Heart left ventricle (tissue), 16 donors: ENCODE measurements at regions of chr17 and their contacts with region 1.

Region 1: DNA sequence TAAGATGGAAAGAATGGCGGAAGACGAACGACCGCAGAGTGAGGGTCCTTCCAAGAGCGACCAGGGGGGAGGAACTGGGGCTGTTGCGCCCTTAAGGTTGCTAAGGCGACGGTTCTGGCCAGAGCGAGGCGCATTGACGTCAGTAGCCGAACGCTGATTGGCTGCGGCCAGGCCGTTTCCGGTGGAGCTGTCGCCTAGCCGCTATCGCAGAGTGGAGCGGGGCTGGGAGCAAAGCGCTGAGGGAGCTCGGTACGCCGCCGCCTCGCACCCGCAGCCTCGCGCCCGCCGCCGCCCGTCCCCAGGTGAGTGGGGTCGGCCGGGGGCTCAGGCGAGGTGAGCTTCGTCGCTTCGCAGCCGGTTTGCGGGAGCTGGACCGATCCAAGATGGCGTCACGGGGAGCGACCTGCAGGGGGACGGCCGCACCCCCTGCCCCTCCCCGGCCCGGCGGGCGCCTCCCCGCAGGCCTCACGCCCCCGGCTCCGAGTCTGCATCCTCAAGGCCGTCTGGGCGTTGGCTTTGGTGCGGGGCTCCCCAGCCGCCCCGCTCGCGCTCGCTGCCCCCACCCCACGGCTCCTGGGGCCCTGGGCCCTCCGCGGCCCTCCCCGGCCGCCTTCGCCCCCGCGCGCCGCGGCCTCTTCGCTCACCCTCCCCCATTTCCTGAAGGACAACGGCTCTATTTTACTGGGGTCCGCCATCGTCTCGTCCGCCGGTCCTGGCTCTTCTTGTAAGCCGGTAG is at the start of gene PRKAR1A:
- DNase-seq: peak; percentile 96 to 97 (median 96)
- ATAC-seq: peak; percentile 89 to 94 (median 92)
- H3K4me3 ChIP-seq: peak within 1 kb of the TSS; percentile 60 to 94 (median 76)
- H3K27ac ChIP-seq: peak within 1 kb of the TSS; percentile 96 to 100 (median 98)
- H3K4me1 ChIP-seq: peaks cover 0 to 73% (median 40%) of the 10 kb centered on the region in 12 donors
- H3K27me3 ChIP-seq: no peaks in the 10 kb centered on the region
- CTCF ChIP-seq: peak in 2 of 12 donors; percentile 11 to 26
- POLR2A ChIP-seq: peak; percentile 74 to 95
- total RNA-seq, gene PRKAR1A: 435 to 1,392 (median 837) TPM

Region 2: GRCh38 chr17:68247445-68248198 is 264.8 kb before region 1 on chr17 and contains the start of gene AMZ2:
- intact Hi-C with region 1: loop called in 1 of 10 experiments (anchors 5 kb)
- DNase-seq: peak; percentile 94 to 99 (median 96)
- ATAC-seq: peak; percentile 98 to 100 (median 98)
- H3K4me3 ChIP-seq: peak within 1 kb of the TSS; percentile 68 to 94 (median 86)
- H3K27ac ChIP-seq: peak within 1 kb of the TSS; percentile 89 to 99 (median 98)
- H3K4me1 ChIP-seq: peaks cover 0 to 26% (median 13%) of the 10 kb centered on the region in 12 donors
- H3K27me3 ChIP-seq: no peaks in the 10 kb centered on the region
- CTCF ChIP-seq: no peak
- POLR2A ChIP-seq: peak; percentile 76 to 98
- total RNA-seq, gene AMZ2: 59.0 to 141 (median 91.3) TPM

Region 3: DNA sequence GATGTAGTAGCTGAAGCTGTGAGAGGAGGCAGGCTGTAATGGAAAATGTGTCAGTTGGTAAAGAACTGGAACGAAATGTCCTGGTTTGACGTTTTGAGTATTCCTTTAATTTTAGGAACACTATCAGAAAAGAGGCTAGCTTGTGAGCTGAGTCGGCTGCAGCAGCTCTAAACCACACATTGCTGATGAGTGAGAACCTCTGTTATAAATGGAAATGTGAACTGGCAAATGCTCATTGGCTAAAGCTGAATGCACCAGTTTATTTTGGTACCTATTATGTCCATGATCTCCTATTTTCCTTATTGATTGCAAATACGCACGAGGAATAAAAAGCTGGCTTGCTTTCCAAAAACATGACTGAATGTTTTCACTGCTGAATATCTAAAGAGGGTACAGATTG is 44.1 kb before region 1 on chr17:
- intact Hi-C with region 1: loop called in 8 of 10 experiments (anchors 1 to 5 kb)
- DNase-seq: peak in 4 of 5 donors; percentile 43 to 60 (median 46)
- ATAC-seq: peak; percentile 82 to 91 (median 90)
- H3K4me3 ChIP-seq: no peak overlapping the region
- H3K27ac ChIP-seq: peak overlapping the region; percentile 71 to 97 (median 90)
- H3K4me1 ChIP-seq: peaks cover 0 to 27% (median 6%) of the 10 kb centered on the region in 12 donors
- H3K27me3 ChIP-seq: no peaks in the 10 kb centered on the region
- CTCF ChIP-seq: no peak
- POLR2A ChIP-seq: no peak